ENCODE measurements at regions of chr4 and their contacts with region 1.

Region 1: DNA sequence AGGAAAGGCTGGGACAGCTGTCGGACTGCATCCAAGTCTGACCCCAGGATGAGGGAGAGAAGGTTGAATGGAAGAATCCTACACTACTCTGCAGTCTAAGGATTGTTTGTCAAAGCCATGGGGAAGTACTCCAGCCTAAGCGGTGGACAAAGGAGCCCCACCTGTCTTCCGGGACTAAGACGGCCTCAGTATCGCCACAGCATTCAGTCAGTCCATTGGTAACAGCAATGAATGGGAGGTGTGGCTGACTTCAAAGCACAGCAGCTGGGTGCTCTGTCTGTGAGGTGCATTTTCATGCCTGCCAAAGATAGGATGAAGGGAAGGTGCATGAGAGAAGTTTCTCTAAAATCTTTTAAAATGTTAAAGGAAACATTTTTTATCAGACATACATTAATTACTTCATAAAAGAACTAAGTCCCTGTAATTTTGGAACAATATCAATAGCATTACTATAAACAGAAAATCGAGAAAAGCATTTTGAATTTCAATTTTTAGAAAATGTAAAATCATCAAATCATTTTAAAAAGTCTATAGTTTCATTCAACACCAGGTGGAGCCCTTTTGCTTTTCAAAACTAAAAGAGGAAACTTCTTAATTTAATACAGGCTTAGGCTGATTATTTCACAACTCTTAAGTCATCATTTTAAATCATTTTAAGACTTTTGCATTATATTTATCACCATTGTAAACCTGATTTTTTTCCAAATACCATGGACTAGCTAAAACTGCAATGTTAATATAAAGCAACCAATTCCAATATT is 27.6 kb upstream of the INTU start:
- DNase-seq: peak; percentile 33
- H3K4me3 ChIP-seq: no peak overlapping the region; a peak in 1 of 4 replicates
- H3K27ac ChIP-seq: no peak overlapping the region
- H3K4me1 ChIP-seq: peaks cover 0 to 2% of the 10 kb centered on the region in 2 experiments; a peak in 1 of 4 replicates
- H3K27me3 ChIP-seq: no peaks in the 10 kb centered on the region; the same call in 1 of the 2 replicates
- CTCF ChIP-seq: peak; percentile 77
- EP300 ChIP-seq: no peak
- RAD21 ChIP-seq: peak; percentile 67

Region 2: GRCh38 chr4:127586922-127587571 is 18.1 kb before region 1 on chr4:
- CTCF ChIA-PET with region 1: interaction called, 10 read pairs
- POLR2A ChIA-PET with region 1: no interaction called
- DNase-seq: peak; percentile 44
- H3K4me3 ChIP-seq: peak overlapping the region in 1 of 2 experiments; percentile 35; a peak in 2 of 4 replicates
- H3K27ac ChIP-seq: no peak overlapping the region
- H3K4me1 ChIP-seq: no peaks in the 10 kb centered on the region; a peak in 1 of 4 replicates
- H3K27me3 ChIP-seq: no peaks in the 10 kb centered on the region
- CTCF ChIP-seq: peak; percentile 69
- EP300 ChIP-seq: no peak
- RAD21 ChIP-seq: peak; percentile 66

Region 3: DNA sequence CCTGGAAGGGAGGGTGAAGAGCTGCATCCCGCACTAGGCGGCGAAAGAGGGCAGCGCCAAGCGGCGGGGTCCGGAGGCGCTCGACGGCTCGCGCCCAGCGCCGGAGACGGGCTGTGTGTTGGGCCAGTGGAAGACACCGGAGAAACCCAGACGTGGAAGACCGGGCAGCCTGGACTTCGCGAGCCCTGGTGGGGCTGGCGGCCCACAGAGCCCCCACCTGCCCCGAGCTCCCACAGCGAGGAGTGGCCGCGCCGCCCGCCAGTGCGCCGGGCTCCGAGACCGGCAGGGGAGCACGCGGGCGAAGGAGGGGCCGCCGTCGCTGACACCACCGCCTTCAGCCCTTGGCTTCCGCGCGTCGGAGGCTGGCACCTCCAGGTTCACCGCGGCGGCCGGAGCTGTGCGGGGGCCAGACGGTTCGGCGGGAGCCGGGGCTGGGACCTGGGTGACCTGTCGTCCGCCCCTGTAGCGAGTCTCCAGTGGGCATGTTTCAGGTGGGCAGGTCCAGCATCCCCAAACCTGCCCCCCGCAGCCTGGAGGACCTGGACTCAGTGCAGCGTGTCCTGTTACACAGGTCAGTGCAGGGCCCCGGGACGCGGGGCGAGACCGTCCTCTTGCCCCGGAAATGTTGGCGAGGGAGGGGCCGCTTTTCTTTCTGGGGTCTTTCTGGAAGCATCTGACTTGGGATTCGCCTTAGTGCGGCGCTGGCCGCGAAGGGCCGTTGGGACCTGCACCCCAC is 18.0 kb after region 1 on chr4:
- CTCF ChIA-PET with region 1: interaction called, 15 read pairs
- POLR2A ChIA-PET with region 1: no interaction called
- DNase-seq: peak; percentile 82
- H3K4me3 ChIP-seq: peak overlapping the region; percentile 45 to 54
- H3K27ac ChIP-seq: no peak overlapping the region
- H3K4me1 ChIP-seq: peaks cover 0 to 3% of the 10 kb centered on the region in 2 experiments; a peak in 1 of 4 replicates
- H3K27me3 ChIP-seq: peaks cover 9% of the 10 kb centered on the region
- CTCF ChIP-seq: peak; percentile 33
- EP300 ChIP-seq: no peak
- RAD21 ChIP-seq: no peak; the same call in 1 of the 2 replicates